Activated naive CD4-positive, alpha-beta T cell treated with anti-CD3 and anti-CD28 coated beads for 36 hours (primary cell): ENCODE measurements at regions of chr4 and their contacts with region 1.

Region 1: GRCh38 chr4:26583865-26584652 is at the start of gene TBC1D19:
- DNase-seq: peak; percentile 92
- H3K4me3 Mint-ChIP-seq: peak within 1 kb of the TSS; percentile 93
- H3K27ac Mint-ChIP-seq: peak within 1 kb of the TSS; percentile 92
- H3K4me1 Mint-ChIP-seq: peaks cover 32% of the 10 kb centered on the region
- H3K27me3 Mint-ChIP-seq: no peaks in the 10 kb centered on the region
- total RNA-seq, gene TBC1D19: 3.8 to 4.1 TPM

Region 2: GRCh38 chr4:25938787-25939186 is 645.3 kb before region 1 on chr4:
- CTCF ChIA-PET with region 1: no interaction called
- intact Hi-C with region 1: loop called (anchors 5 kb)
- DNase-seq: peak; percentile 68
- H3K4me3 Mint-ChIP-seq: no peak overlapping the region
- H3K27ac Mint-ChIP-seq: peak overlapping the region; percentile 5
- H3K4me1 Mint-ChIP-seq: peaks cover 20% of the 10 kb centered on the region
- H3K27me3 Mint-ChIP-seq: peaks cover 15% of the 10 kb centered on the region

Region 3: DNA sequence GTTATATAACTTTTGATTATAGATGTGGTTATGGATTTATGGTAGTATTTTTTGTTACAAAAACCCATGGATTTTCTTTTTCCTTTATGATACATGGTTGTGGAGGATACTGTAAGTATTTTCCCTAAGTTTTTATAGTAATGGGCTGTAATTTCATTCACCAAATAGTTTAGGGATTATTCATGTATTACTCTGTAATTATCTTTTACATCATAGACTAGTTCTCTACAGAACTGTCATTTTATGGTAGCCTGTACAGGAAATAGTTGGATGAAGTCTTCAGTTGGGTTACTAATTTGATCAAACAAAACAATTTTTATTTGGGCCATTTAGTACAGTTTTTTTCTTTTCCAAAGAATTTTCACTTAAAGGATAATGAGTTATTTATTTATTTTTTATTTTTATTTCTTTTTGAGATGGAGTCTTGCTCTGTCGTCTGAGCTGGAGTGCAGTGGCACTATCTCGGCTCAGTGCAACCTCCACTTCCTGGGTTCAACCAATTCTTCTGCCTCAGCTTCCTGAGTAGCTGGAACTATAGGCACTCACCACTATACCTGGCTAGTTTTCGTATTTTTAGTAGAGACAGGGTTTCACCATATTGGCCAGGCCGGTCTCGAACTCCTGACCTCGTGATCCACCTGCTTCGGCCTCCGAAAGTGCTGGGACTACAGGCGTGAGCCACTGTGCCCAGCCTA is 221.2 kb before region 1 on chr4:
- CTCF ChIA-PET with region 1: no interaction called
- intact Hi-C with region 1: no loop called
- DNase-seq: no peak
- H3K4me3 Mint-ChIP-seq: no peak overlapping the region
- H3K27ac Mint-ChIP-seq: no peak overlapping the region
- H3K4me1 Mint-ChIP-seq: peaks cover 26% of the 10 kb centered on the region
- H3K27me3 Mint-ChIP-seq: no peaks in the 10 kb centered on the region

Region 4: DNA sequence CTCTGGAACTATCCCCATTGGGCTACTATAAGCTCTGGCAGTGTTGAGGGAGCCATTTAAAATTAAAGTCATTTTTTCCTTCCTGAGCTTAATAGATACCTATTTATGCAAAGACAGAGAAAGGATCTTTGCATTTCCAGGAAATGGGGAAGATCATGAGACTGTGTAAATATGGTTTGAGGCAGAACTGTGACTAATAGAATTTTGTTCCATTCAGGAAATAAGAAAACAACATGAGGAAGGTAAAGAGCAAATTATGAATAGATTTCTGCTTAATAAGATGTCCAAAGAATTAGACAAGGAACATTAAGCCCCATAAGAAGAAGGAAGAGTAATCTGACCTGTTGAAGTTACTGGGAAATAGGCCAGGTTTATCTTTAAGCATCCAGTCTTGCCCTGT is 17.9 kb before region 1 on chr4:
- CTCF ChIA-PET with region 1: no interaction called
- intact Hi-C with region 1: loop called (anchors 1 kb)
- DNase-seq: no peak
- H3K4me3 Mint-ChIP-seq: peak overlapping the region; percentile 34
- H3K27ac Mint-ChIP-seq: peak overlapping the region; percentile 15
- H3K4me1 Mint-ChIP-seq: peaks cover 21% of the 10 kb centered on the region
- H3K27me3 Mint-ChIP-seq: peaks cover 13% of the 10 kb centered on the region

Region 5: DNA sequence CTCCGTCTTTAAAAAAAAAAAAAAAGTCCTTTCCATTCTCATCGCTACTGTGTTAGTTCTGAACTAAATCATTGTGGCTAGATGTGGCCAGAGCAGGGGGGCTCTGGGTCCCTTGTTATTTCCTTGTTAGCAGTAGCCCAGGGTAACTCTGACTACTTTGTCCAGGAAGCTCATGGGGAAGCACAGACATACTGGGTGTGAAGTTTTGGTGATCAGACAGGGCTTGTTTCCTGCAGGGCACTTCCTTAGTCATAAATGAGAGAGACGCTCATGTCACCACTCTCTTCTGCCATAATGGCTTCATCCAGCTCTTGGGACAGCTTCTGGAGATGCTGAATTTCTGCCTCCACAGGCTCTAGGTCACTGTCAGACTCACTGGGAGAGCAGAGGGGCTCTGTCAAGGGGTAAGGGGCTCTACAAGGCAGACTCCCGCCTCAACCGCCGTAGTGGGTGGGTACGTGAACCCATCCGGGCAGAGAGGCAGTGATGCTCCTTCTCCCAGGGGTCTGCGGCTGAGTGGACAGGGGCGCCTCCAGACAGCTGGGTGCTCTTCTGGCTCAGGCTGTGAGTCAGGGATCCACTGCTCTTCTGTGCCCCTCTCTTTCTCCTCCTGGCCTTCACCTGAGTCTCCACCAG is 289.4 kb after region 1 on chr4:
- CTCF ChIA-PET with region 1: no interaction called
- intact Hi-C with region 1: loop called (anchors 1 kb)
- DNase-seq: peak; percentile 89
- H3K4me3 Mint-ChIP-seq: no peak overlapping the region
- H3K27ac Mint-ChIP-seq: peak overlapping the region; percentile 69
- H3K4me1 Mint-ChIP-seq: peaks cover 80% of the 10 kb centered on the region
- H3K27me3 Mint-ChIP-seq: no peaks in the 10 kb centered on the region